Activated naive CD8-positive, alpha-beta T cell treated with anti-CD3 and anti-CD28 coated beads, Interleukin-2, amount 10 ng/mL, durations not matched to agents 7 days and 5 days (primary cell): ENCODE measurements at regions of chr12 and their contacts with region 1.

Region 1: DNA sequence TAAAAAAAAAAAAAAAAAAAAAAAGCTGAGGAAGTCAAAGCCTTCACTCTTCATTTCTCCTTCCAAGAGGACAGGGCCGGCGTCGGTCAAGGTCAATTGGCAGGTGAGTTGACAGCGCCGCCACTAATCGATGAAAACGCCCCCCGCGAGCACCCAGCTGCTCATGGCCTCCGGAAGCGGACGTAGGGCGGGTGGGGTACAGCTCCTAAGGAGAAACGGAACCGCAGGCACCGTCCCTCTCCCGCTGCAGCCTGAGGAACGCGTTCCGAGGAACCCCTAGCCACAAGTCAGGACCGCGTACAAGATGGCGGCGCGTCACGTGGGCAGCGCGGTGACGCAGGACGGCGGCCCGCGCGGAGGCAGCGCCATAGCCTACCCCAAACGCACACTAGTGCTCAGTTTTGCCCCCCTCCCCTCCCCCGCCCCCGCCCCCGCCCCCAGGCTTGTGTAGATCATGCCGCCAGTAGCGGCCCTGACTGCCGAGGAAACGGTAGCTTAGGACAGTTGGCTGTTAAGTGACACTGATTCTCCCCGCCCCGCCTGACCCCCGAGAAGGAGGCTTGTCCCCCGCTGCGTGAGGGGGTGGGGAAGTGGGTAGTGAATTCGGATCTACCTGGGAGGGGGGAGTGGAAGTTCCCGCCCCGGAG is at the start of gene ATF1:
- DNase-seq: peak; percentile 94
- ATAC-seq: peak; percentile 82
- H3K4me3 Mint-ChIP-seq: peak within 1 kb of the TSS; percentile 91
- H3K27ac Mint-ChIP-seq: peak within 1 kb of the TSS; percentile 94
- H3K4me1 Mint-ChIP-seq: peaks cover 19% of the 10 kb centered on the region
- H3K27me3 Mint-ChIP-seq: no peaks in the 10 kb centered on the region
- total RNA-seq, gene ATF1: 36.4 to 39.1 TPM

Region 2: DNA sequence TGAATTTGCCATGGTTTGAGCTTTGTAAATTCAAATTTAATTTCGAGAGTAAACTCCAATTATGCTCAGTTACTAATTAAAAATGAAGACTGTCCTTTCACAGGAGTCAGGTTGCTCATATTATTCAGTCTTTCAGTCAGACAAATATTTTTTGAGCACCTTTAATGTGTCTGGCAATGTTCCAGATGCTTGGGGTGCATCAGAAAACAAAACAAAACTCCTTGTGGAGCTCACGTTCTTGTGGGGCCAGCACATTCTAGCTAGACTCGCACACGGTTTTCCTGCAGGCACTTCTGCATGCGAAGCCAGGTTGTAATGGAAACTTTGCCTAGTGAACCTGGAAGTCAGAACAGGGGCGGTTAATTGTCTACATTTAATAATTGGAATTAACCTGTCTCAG is 63.8 kb before region 1 on chr12:
- POLR2A ChIA-PET with region 1: no interaction called
- DNase-seq: no peak
- ATAC-seq: no peak
- H3K4me3 Mint-ChIP-seq: no peak overlapping the region
- H3K27ac Mint-ChIP-seq: no peak overlapping the region
- H3K4me1 Mint-ChIP-seq: no peaks in the 10 kb centered on the region
- H3K27me3 Mint-ChIP-seq: no peaks in the 10 kb centered on the region

Region 3: DNA sequence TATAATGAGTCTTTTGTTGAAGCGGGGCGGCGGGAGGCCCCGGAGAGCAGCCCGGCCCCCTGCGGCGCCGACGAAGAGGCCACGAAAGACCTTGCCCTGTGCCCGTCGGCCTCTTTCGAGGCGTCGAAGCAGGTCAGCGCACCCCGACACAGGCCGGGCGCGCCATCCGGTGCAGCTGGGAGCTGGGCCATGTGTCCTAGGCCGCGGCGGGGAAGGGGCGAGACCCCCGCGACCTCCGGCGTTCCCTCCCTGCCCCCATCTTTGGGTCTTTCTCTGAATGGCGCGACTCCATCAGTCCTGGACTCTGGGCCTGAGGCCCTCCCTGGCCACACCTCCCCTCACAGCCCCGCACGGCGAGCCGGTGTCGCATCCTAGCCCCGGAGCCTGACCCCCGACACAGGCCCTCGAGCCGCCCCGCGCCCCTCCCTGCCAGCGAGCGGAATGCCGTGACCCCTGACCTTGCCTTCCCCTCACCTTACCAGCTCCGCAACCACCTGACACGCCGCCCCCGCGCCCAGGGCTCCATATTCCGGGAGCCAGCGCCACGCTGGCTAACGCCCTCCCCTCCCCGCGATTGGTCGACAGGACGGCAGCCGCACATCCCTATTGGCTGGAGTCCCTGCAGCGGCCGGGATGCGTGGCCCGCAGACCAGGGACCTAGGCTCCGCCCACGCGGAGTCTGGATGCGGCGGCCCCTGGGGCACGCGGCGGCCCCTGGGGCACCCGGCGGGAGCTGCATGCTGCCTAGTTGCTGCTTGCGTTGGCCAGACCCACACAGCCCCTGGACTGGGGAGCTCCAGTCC is 262.3 kb after region 1 on chr12 and contains the start of gene SLC11A2:
- POLR2A ChIA-PET with region 1: interaction called, 21 read pairs
- DNase-seq: peak; percentile 93
- ATAC-seq: peak; percentile 95
- H3K4me3 Mint-ChIP-seq: peak within 1 kb of the TSS; percentile 99
- H3K27ac Mint-ChIP-seq: peak within 1 kb of the TSS; percentile 99
- H3K4me1 Mint-ChIP-seq: peaks cover 39% of the 10 kb centered on the region
- H3K27me3 Mint-ChIP-seq: peaks cover 7% of the 10 kb centered on the region
- total RNA-seq, gene SLC11A2: 40.9 to 44.0 TPM